Activated naive CD4-positive, alpha-beta T cell treated with anti-CD3 and anti-CD28 coated beads for 36 hours (primary cell): ENCODE measurements at regions of chr22 and their contacts with region 1.

Region 1: DNA sequence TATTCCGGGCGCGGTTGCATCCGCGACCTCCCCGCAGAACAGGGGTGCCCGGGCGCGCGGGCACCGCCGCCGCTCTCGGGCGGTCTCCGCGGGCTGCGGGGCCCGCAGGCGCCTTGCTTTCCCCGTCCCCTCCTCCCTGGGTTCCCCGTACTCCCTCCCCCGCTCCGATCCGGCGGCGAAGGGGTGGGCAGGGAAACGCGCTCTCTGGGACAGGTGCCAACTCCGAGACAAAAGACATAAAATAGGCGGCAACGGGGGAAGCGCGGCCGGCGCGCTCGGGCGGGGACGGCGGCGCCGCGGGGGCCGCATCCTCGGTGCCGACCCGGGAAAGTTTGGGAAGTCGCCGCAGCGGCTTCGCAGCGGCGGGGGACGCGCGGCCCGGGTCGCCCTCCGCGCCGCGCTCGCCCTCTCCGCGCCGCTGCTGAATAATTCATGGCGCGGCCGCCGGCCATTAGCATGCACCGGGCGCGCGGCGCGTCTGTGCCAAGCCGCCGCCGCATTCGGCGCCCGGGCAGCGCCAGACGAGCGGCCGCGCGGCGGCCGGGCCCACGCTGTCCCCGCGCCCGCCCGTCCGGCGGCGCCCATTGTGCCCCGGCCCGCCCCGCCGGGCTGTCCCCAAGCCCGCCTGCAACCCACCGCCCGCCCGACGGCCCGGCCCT is 78.7 kb upstream of the PPARA start:
- DNase-seq: peak; percentile 76
- H3K4me3 Mint-ChIP-seq: peak overlapping the region; percentile 83
- H3K27ac Mint-ChIP-seq: peak overlapping the region; percentile 87
- H3K4me1 Mint-ChIP-seq: peaks cover 49% of the 10 kb centered on the region
- H3K27me3 Mint-ChIP-seq: no peaks in the 10 kb centered on the region

Region 2: GRCh38 chr22:46013460-46014416 is 57.8 kb before region 1 on chr22:
- CTCF ChIA-PET with region 1: interaction called, 10 read pairs
- intact Hi-C with region 1: loop called (anchors 1 kb)
- DNase-seq: peak; percentile 97
- H3K4me3 Mint-ChIP-seq: peak overlapping the region; percentile 81
- H3K27ac Mint-ChIP-seq: peak overlapping the region; percentile 83
- H3K4me1 Mint-ChIP-seq: peaks cover 5% of the 10 kb centered on the region
- H3K27me3 Mint-ChIP-seq: no peaks in the 10 kb centered on the region

Region 3: GRCh38 chr22:46044621-46045438 is 26.8 kb before region 1 on chr22:
- CTCF ChIA-PET with region 1: no interaction called
- intact Hi-C with region 1: no loop called
- DNase-seq: peak; percentile 45
- H3K4me3 Mint-ChIP-seq: peak overlapping the region; percentile 82
- H3K27ac Mint-ChIP-seq: peak overlapping the region; percentile 89
- H3K4me1 Mint-ChIP-seq: peaks cover 23% of the 10 kb centered on the region
- H3K27me3 Mint-ChIP-seq: no peaks in the 10 kb centered on the region

Region 4: GRCh38 chr22:46057762-46058420 is 13.7 kb before region 1 on chr22:
- CTCF ChIA-PET with region 1: interaction called, 3 read pairs
- intact Hi-C with region 1: loop called (anchors 1 kb)
- DNase-seq: peak; percentile 59
- H3K4me3 Mint-ChIP-seq: peak overlapping the region; percentile 42
- H3K27ac Mint-ChIP-seq: peak overlapping the region; percentile 73
- H3K4me1 Mint-ChIP-seq: peaks cover 43% of the 10 kb centered on the region
- H3K27me3 Mint-ChIP-seq: no peaks in the 10 kb centered on the region

Region 5: DNA sequence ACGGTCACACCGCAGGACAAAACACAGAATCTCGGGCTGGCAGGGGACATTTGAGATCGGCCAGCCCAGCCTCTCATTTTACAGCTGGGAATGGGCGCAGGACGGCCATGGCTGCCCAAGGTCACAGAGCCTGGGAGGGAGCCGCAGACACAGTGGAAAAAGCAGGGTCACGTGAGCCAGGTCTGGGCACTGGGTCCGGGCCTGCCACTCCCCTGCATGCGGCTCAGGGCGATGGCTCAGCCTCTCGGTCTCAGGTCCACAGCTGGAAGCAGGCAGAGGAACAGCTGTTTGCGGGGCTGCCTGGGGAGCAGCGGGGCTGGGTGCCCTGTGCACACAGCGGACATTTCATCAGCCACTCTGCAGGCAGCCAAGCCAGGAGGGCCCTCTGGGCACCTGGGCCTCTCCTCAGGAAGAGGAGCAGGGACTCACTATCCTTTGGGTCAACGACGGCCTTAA is 68.3 kb after region 1 on chr22:
- CTCF ChIA-PET with region 1: no interaction called
- intact Hi-C with region 1: no loop called
- DNase-seq: no peak
- H3K4me3 Mint-ChIP-seq: no peak overlapping the region
- H3K27ac Mint-ChIP-seq: no peak overlapping the region
- H3K4me1 Mint-ChIP-seq: no peaks in the 10 kb centered on the region
- H3K27me3 Mint-ChIP-seq: no peaks in the 10 kb centered on the region

Region 6: DNA sequence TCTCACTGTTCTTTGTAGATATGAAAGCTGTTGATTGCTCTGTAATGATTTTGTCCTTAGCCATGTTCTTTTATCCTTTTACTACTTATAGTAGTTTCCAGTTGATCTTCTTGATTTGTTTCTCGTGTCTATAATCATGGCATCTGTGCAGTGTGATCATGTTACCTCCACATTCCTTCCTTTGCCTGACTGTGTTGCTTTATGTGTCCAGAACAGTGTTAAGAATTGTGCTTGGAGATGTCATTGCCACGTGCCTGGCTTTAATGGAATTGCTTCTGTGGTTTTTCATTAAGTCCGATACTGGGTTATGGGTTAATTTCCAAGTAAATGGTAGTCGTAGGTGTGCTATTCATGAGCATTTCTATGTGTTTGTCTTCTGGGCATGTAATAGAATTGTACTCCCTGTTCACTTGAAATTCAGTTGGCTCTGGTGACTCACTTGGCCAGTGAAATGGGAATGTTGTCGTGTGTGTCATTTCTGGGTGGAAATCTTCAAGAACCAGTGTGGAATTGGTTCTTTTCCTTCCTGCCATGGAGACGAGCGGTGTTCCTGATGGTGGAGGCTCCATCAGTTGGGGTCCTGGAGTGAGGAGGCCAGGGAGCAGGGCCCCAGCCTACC is 231.9 kb after region 1 on chr22:
- CTCF ChIA-PET with region 1: no interaction called
- intact Hi-C with region 1: no loop called
- DNase-seq: no peak
- H3K4me3 Mint-ChIP-seq: no peak overlapping the region
- H3K27ac Mint-ChIP-seq: no peak overlapping the region
- H3K4me1 Mint-ChIP-seq: peaks cover 6% of the 10 kb centered on the region
- H3K27me3 Mint-ChIP-seq: peaks cover 7% of the 10 kb centered on the region